Naive thymus-derived CD4-positive, alpha-beta T cell (primary cell): ENCODE measurements at regions of chr10 and their contacts with region 1.

Region 1: DNA sequence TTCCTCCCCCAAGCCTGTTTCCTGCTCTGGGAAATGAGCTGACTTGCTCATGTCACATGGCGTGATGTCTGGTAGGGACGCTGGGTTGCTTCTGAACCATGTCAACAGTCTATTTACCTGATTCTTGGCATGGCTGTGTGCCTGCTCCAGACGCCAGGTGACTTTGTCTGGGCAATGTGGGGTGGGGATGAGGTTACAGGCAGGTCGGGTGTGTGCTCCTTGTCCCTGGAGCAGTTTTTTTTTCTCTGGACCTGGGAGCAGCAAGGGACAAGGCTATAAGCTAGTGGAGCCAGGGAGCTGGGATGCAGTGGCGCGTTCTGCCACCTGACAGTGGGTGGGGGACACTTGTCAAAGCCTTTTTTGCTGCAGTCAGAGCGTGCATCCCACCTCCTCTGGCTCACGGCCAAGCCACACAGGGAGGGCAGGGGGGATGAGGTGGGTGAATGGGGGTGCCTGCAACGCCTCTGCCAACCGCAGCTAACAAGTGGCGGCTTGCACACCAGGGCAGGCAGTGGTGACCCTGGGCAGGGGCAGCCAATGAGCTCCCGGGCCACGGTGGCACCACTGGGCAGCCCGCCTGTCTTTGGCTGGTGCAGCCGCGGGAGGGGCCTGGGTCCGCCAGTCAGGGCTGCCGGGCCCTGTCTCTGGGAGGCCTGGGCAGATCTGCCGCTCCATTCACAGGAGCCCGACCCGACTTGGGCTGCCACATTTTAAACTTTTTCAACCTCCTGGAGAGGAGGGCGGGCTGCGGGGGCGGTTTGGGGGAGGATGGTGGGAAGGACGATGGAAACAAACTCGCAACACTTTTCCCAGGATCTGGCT is 22.9 kb downstream of the DNAJB12 start:
- DNase-seq: peak; percentile 77 to 94 (median 91)
- ATAC-seq: peak; percentile 84
- H3K4me3 ChIP-seq: peak overlapping the region; percentile 61
- H3K4me3 Mint-ChIP-seq: peak overlapping the region; percentile 76 to 93 (median 84)
- H3K27ac ChIP-seq: peak overlapping the region; percentile 79
- H3K27ac Mint-ChIP-seq: peak overlapping the region; percentile 94 to 99 (median 98)
- H3K4me1 ChIP-seq: peaks cover 84 to 94% of the 10 kb centered on the region in 2 donors
- H3K4me1 Mint-ChIP-seq: peaks cover 52 to 95% (median 90%) of the 10 kb centered on the region in 7 donors
- H3K27me3 ChIP-seq: no peaks in the 10 kb centered on the region
- H3K27me3 Mint-ChIP-seq: no peaks in the 10 kb centered on the region

Region 2: GRCh38 chr10:71893920-71894319 is 437.9 kb before region 1 on chr10:
- CTCF ChIA-PET with region 1: interaction called, 16 read pairs
- POLR2A ChIA-PET with region 1: no interaction called
- intact Hi-C with region 1: no loop called
- DNase-seq: no peak
- ATAC-seq: no peak
- H3K4me3 ChIP-seq: no peak overlapping the region
- H3K4me3 Mint-ChIP-seq: no peak overlapping the region
- H3K27ac ChIP-seq: no peak overlapping the region
- H3K27ac Mint-ChIP-seq: peak overlapping the region in 1 of 9 donors; percentile 78
- H3K4me1 ChIP-seq: peaks cover 0 to 11% of the 10 kb centered on the region in 2 donors
- H3K4me1 Mint-ChIP-seq: peaks cover 5 to 22% (median 11%) of the 10 kb centered on the region in 7 donors
- H3K27me3 ChIP-seq: no peaks in the 10 kb centered on the region
- H3K27me3 Mint-ChIP-seq: peaks cover 0 to 7% (median 0%) of the 10 kb centered on the region in 5 donors

Region 3: DNA sequence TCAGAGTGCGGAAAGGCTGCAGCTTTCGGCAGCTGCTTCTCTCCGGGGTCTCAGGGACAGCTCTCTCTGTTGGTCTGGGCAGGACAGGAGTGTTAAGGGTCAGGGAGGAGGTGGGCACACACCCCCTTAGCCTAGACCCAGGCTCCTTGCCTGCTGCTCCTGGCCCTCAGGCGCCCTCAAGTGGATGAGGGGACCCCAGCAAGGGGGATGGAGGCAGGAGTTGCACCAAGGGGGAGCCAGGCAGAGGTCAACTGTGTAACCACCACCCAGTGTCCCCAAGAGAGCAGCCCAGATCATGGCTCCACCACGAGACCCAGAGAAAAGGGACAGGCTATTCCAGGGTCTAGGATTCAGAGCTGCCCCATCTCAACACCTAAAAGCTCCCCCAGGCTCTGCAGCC is 270.3 kb before region 1 on chr10:
- CTCF ChIA-PET with region 1: interaction called, 3 read pairs
- POLR2A ChIA-PET with region 1: interaction called, 4 read pairs
- intact Hi-C with region 1: loop called in 1 of 2 experiments (anchors 5 kb)
- DNase-seq: no peak
- ATAC-seq: peak; percentile 22
- H3K4me3 ChIP-seq: no peak overlapping the region
- H3K4me3 Mint-ChIP-seq: peak overlapping the region in 2 of 10 donors; percentile 32 to 66
- H3K27ac ChIP-seq: no peak overlapping the region
- H3K27ac Mint-ChIP-seq: peak overlapping the region; percentile 34 to 91 (median 80)
- H3K4me1 ChIP-seq: no peaks in the 10 kb centered on the region
- H3K4me1 Mint-ChIP-seq: peaks cover 0 to 37% (median 24%) of the 10 kb centered on the region in 7 donors
- H3K27me3 ChIP-seq: no peaks in the 10 kb centered on the region
- H3K27me3 Mint-ChIP-seq: no peaks in the 10 kb centered on the region

Region 4: DNA sequence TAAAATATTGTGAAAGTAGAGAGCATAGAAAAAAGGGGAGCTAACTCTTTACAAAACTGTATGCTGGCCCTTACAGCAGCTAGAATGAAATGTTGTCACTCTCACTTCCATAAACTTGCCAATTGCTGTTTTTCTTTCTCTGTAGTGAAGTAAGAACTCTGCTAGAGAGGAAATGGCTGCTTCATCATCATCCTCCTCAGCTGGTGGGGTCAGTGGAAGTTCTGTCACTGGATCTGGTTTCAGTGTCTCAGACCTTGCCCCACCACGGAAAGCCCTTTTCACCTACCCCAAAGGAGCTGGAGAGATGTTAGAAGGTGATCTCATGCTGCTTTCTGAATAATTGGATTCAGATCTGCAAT is 108.1 kb before region 1 on chr10:
- CTCF ChIA-PET with region 1: interaction called, 13 read pairs
- POLR2A ChIA-PET with region 1: interaction called, 6 read pairs
- intact Hi-C with region 1: loop called (anchors 2 kb)
- DNase-seq: no peak
- ATAC-seq: peak; percentile 37
- H3K4me3 ChIP-seq: no peak overlapping the region
- H3K4me3 Mint-ChIP-seq: peak overlapping the region in 8 of 10 donors; percentile 43 to 81 (median 56)
- H3K27ac ChIP-seq: peak overlapping the region; percentile 43
- H3K27ac Mint-ChIP-seq: peak overlapping the region; percentile 35 to 89 (median 72)
- H3K4me1 ChIP-seq: peaks cover 9 to 48% of the 10 kb centered on the region in 2 donors
- H3K4me1 Mint-ChIP-seq: peaks cover 43 to 68% (median 57%) of the 10 kb centered on the region in 7 donors
- H3K27me3 ChIP-seq: no peaks in the 10 kb centered on the region
- H3K27me3 Mint-ChIP-seq: no peaks in the 10 kb centered on the region

Region 5: GRCh38 chr10:72260588-72261322 is 71.1 kb before region 1 on chr10:
- CTCF ChIA-PET with region 1: interaction called, 7 read pairs
- POLR2A ChIA-PET with region 1: interaction called, 10 read pairs
- intact Hi-C with region 1: loop called in 1 of 2 experiments (anchors 1 kb)
- DNase-seq: peak; percentile 55 to 89 (median 63)
- ATAC-seq: peak; percentile 85
- H3K4me3 ChIP-seq: peak overlapping the region; percentile 68
- H3K4me3 Mint-ChIP-seq: peak overlapping the region; percentile 83 to 93 (median 90)
- H3K27ac ChIP-seq: peak overlapping the region; percentile 78
- H3K27ac Mint-ChIP-seq: peak overlapping the region; percentile 87 to 97 (median 94)
- H3K4me1 ChIP-seq: peaks cover 45 to 63% of the 10 kb centered on the region in 2 donors
- H3K4me1 Mint-ChIP-seq: peaks cover 32 to 83% (median 67%) of the 10 kb centered on the region in 7 donors
- H3K27me3 ChIP-seq: no peaks in the 10 kb centered on the region
- H3K27me3 Mint-ChIP-seq: no peaks in the 10 kb centered on the region

Region 6: GRCh38 chr10:72319416-72320254 is 12.2 kb before region 1 on chr10:
- CTCF ChIA-PET with region 1: interaction called, 7 read pairs
- POLR2A ChIA-PET with region 1: interaction called, 76 read pairs
- intact Hi-C with region 1: loop called (anchors 1 kb)
- DNase-seq: peak; percentile 82 to 90 (median 88)
- ATAC-seq: peak; percentile 85
- H3K4me3 ChIP-seq: peak overlapping the region; percentile 60
- H3K4me3 Mint-ChIP-seq: peak overlapping the region; percentile 69 to 89 (median 82)
- H3K27ac ChIP-seq: peak overlapping the region; percentile 94
- H3K27ac Mint-ChIP-seq: peak overlapping the region; percentile 90 to 98 (median 97)
- H3K4me1 ChIP-seq: peaks cover 61 to 90% of the 10 kb centered on the region in 2 donors
- H3K4me1 Mint-ChIP-seq: peaks cover 58 to 90% (median 83%) of the 10 kb centered on the region in 7 donors
- H3K27me3 ChIP-seq: no peaks in the 10 kb centered on the region
- H3K27me3 Mint-ChIP-seq: no peaks in the 10 kb centered on the region

Region 7: DNA sequence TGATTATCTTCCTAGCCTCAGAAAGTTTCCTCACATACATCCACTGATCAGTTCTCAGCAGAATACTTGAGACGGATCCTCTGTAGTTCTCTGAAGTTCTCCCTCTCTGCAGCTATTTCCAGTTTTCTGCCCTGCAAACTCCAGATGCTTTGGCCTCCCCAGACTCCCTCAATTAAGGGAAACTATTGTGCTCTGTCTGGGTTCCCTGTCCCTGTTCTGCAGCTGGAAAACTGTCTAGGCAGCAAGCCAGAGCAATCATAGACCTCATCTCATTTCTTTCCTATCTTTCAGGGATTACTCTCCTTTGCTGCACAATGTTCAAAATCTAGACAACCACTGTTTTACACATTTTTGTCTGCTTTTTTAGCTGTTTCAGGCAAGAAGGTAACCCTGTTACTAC is 284.9 kb after region 1 on chr10:
- CTCF ChIA-PET with region 1: no interaction called
- POLR2A ChIA-PET with region 1: no interaction called
- intact Hi-C with region 1: no loop called
- DNase-seq: no peak
- ATAC-seq: no peak
- H3K4me3 ChIP-seq: no peak overlapping the region
- H3K4me3 Mint-ChIP-seq: no peak overlapping the region
- H3K27ac ChIP-seq: no peak overlapping the region
- H3K27ac Mint-ChIP-seq: no peak overlapping the region
- H3K4me1 ChIP-seq: no peaks in the 10 kb centered on the region
- H3K4me1 Mint-ChIP-seq: peaks cover 5 to 27% (median 18%) of the 10 kb centered on the region in 7 donors
- H3K27me3 ChIP-seq: no peaks in the 10 kb centered on the region
- H3K27me3 Mint-ChIP-seq: no peaks in the 10 kb centered on the region